CD4-positive, alpha-beta memory T cell (primary cell): ENCODE measurements at regions of chr17 and their contacts with region 1.

Region 1: DNA sequence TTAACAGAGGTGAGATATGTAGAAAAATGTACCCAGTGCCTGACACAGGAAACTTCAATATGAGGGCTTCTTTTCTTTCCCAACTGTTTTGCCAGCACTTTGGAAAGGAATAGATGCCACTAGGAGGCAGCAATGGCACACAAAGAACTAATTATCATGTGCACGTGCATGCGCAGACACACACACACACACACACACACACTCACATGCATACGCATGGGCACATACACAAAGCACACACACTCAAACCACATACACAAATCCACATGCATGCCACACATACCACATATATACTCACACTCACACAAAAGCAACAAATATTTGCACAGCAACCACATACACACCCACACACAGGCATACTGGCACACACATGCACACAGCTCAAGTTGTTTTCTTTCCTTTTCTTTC is 8.8 kb upstream of the CEP112 start:
- DNase-seq: peak; percentile 50 to 62 (median 55)
- H3K4me3 ChIP-seq: no peak overlapping the region
- H3K4me3 Mint-ChIP-seq: peak overlapping the region in 6 of 8 donors; percentile 14 to 63 (median 44)
- H3K27ac ChIP-seq: no peak overlapping the region
- H3K27ac Mint-ChIP-seq: peak overlapping the region in 5 of 7 donors; percentile 43 to 66 (median 58)
- H3K4me1 ChIP-seq: peaks cover 23% of the 10 kb centered on the region
- H3K4me1 Mint-ChIP-seq: peaks cover 15 to 22% (median 18%) of the 10 kb centered on the region in 4 donors
- H3K27me3 ChIP-seq: no peaks in the 10 kb centered on the region
- H3K27me3 Mint-ChIP-seq: no peaks in the 10 kb centered on the region

Region 2: DNA sequence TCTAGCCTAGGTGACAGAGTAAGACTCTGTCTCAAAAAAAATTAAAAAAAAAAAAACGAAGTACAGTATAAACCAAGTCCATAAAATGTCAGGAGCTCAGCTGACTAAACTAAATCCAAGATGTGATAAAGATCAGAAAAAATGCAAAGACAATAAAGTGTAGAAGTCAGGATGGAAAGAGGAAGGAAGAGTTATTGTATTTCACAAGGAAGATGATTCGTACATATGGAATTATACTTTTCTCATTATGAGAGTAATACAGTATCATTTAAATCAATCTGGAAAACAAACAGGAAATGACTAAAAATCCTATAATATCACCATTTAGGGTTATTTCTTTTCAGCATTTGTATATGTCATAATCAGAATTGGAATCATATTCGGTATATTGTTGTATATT is 39.9 kb after region 1 on chr17:
- CTCF ChIA-PET with region 1: interaction called, 24 read pairs
- POLR2A ChIA-PET with region 1: no interaction called
- intact Hi-C with region 1: no loop called
- DNase-seq: no peak
- H3K4me3 ChIP-seq: no peak overlapping the region
- H3K4me3 Mint-ChIP-seq: no peak overlapping the region
- H3K27ac ChIP-seq: no peak overlapping the region
- H3K27ac Mint-ChIP-seq: no peak overlapping the region
- H3K4me1 ChIP-seq: peaks cover 1% of the 10 kb centered on the region
- H3K4me1 Mint-ChIP-seq: peaks cover 7 to 9% (median 8%) of the 10 kb centered on the region in 4 donors
- H3K27me3 ChIP-seq: no peaks in the 10 kb centered on the region
- H3K27me3 Mint-ChIP-seq: no peaks in the 10 kb centered on the region

Region 3: GRCh38 chr17:66255112-66255511 is 54.4 kb after region 1 on chr17:
- CTCF ChIA-PET with region 1: interaction called, 7 read pairs
- POLR2A ChIA-PET with region 1: no interaction called
- intact Hi-C with region 1: loop called (anchors 2 kb)
- DNase-seq: peak; percentile 64 to 74 (median 70)
- H3K4me3 ChIP-seq: no peak overlapping the region
- H3K4me3 Mint-ChIP-seq: peak overlapping the region; percentile 25 to 81 (median 66)
- H3K27ac ChIP-seq: peak overlapping the region; percentile 10
- H3K27ac Mint-ChIP-seq: peak overlapping the region; percentile 19 to 95 (median 81)
- H3K4me1 ChIP-seq: peaks cover 26% of the 10 kb centered on the region
- H3K4me1 Mint-ChIP-seq: peaks cover 16 to 25% (median 20%) of the 10 kb centered on the region in 4 donors
- H3K27me3 ChIP-seq: no peaks in the 10 kb centered on the region
- H3K27me3 Mint-ChIP-seq: no peaks in the 10 kb centered on the region

Region 4: GRCh38 chr17:66426397-66427033 is 225.8 kb after region 1 on chr17:
- CTCF ChIA-PET with region 1: interaction called, 5 read pairs
- POLR2A ChIA-PET with region 1: no interaction called
- intact Hi-C with region 1: loop called (anchors 1 kb)
- DNase-seq: peak; percentile 59 to 68 (median 62)
- H3K4me3 ChIP-seq: no peak overlapping the region
- H3K4me3 Mint-ChIP-seq: peak overlapping the region; percentile 45 to 86 (median 64)
- H3K27ac ChIP-seq: no peak overlapping the region
- H3K27ac Mint-ChIP-seq: peak overlapping the region; percentile 45 to 91 (median 87)
- H3K4me1 ChIP-seq: peaks cover 17% of the 10 kb centered on the region
- H3K4me1 Mint-ChIP-seq: peaks cover 38 to 83% (median 60%) of the 10 kb centered on the region in 4 donors
- H3K27me3 ChIP-seq: no peaks in the 10 kb centered on the region
- H3K27me3 Mint-ChIP-seq: no peaks in the 10 kb centered on the region

Region 5: GRCh38 chr17:66673668-66674315 is 473.1 kb after region 1 on chr17:
- CTCF ChIA-PET with region 1: interaction called, 3 read pairs
- POLR2A ChIA-PET with region 1: interaction called, 4 read pairs
- intact Hi-C with region 1: loop called (anchors 1 kb)
- DNase-seq: peak; percentile 75 to 88 (median 84)
- H3K4me3 ChIP-seq: peak overlapping the region in 1 of 2 donors; percentile 21
- H3K4me3 Mint-ChIP-seq: peak overlapping the region; percentile 42 to 88 (median 74)
- H3K27ac ChIP-seq: peak overlapping the region; percentile 64
- H3K27ac Mint-ChIP-seq: peak overlapping the region; percentile 88 to 97 (median 96)
- H3K4me1 ChIP-seq: peaks cover 43% of the 10 kb centered on the region
- H3K4me1 Mint-ChIP-seq: peaks cover 43 to 79% (median 57%) of the 10 kb centered on the region in 4 donors
- H3K27me3 ChIP-seq: no peaks in the 10 kb centered on the region
- H3K27me3 Mint-ChIP-seq: no peaks in the 10 kb centered on the region